Esophagus muscularis mucosa (tissue), 4 donors: ENCODE measurements at regions of chr9 and their contacts with region 1.

Region 1: DNA sequence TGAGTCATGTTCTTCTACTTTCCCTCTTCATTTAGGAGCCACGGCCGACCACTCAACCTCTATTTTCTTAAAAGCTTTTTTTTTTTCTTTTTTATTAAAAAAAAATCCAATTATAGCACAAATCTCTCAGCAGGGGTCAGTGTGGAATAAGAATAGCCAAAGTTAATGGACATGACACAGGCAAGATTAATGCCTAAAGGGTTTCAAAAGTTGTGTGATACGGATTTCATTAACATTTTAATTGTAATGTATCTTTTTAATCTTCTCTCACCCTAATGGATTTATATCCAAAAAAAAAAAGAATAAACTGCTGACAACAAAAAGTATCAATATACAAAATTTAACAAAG is 5.4 kb downstream of the NACC2 start:
- DNase-seq: no peak
- H3K4me3 ChIP-seq: peak overlapping the region in 2 of 4 donors; percentile 36 to 81
- H3K27ac ChIP-seq: peak overlapping the region; percentile 85 to 99 (median 94)
- H3K4me1 ChIP-seq: peaks cover 88 to 98% (median 94%) of the 10 kb centered on the region in 4 donors
- H3K27me3 ChIP-seq: no peaks in the 10 kb centered on the region
- CTCF ChIP-seq: peak; percentile 41 to 65 (median 52)
- EP300 ChIP-seq: no peak
- POLR2A ChIP-seq: no peak

Region 2: DNA sequence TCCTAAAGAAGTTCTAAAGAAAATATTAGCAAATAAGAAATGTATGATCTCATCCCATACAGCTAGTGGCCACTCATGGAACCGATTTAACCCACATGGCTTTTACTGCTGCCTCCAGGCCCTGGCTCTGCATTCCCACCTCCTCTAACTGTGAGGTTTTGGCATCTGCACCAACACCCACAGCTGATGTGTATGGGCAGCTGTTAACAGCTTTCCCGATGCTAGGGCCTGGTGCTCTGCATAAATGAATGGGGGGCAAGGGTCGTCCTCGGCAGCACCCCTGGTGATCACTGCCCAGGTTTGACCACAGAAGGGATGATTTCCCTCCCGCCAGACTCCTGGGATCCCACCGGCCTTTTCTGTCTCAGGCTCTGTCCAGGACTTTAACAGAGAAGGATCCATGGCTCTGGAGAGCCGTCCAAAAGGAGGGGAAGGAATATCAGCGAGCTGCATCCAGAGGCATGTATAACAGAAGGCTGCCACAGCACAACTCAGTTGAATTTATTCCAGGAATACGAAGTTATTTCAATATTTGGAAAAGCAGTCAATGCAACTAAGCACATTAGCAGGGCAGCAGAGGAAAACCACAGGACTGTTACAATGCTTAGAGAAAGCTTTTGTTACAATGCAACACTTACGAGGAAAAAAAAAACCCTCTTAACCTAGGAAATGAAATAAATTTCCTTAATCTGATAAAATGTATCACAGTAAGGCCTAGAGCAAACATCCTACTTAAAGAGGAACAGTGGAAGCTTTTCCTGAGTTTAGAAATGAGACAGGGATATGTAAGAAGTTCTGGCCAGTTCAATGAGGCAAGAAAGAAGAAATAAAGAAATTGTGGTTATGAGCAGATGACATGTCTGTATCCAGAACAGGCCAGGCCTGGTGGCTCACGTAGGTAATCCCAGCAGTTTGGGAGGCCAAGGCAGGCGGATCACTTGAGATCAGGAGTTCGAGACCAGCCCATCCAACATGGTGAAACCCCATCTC is 57.6 kb before region 1 on chr9:
- intact Hi-C with region 1: no loop called
- DNase-seq: no peak
- H3K4me3 ChIP-seq: no peak overlapping the region
- H3K27ac ChIP-seq: peak overlapping the region in 2 of 4 donors; percentile 14 to 21
- H3K4me1 ChIP-seq: peaks cover 11 to 72% (median 57%) of the 10 kb centered on the region in 4 donors
- H3K27me3 ChIP-seq: no peaks in the 10 kb centered on the region
- CTCF ChIP-seq: no peak
- EP300 ChIP-seq: no peak
- POLR2A ChIP-seq: no peak

Region 3: GRCh38 chr9:136051517-136052432 is 37.9 kb before region 1 on chr9:
- intact Hi-C with region 1: loop called (anchors 5 kb)
- DNase-seq: peak; percentile 92
- H3K4me3 ChIP-seq: peak overlapping the region; percentile 55 to 70 (median 58)
- H3K27ac ChIP-seq: peak overlapping the region; percentile 76 to 90 (median 87)
- H3K4me1 ChIP-seq: peaks cover 76 to 100% (median 100%) of the 10 kb centered on the region in 4 donors
- H3K27me3 ChIP-seq: no peaks in the 10 kb centered on the region
- CTCF ChIP-seq: no peak
- EP300 ChIP-seq: no peak
- POLR2A ChIP-seq: no peak